Natural killer cell (primary cell): ENCODE measurements at regions of chr1 and their contacts with region 1.

Region 1: GRCh38 chr1:205313563-205314308 is 7.8 kb downstream of the NUAK2 start:
- DNase-seq: peak; percentile 51 to 78
- ATAC-seq: peak; percentile 86 to 91 (median 89)
- H3K4me3 ChIP-seq: peak overlapping the region; percentile 22
- H3K4me3 Mint-ChIP-seq: peak overlapping the region; percentile 86
- H3K27ac ChIP-seq: peak overlapping the region; percentile 88
- H3K27ac Mint-ChIP-seq: peak overlapping the region; percentile 94 to 98
- H3K4me1 ChIP-seq: peaks cover 82% of the 10 kb centered on the region
- H3K4me1 Mint-ChIP-seq: peaks cover 76 to 82% of the 10 kb centered on the region in 2 donors
- H3K27me3 ChIP-seq: no peaks in the 10 kb centered on the region
- H3K27me3 Mint-ChIP-seq: no peaks in the 10 kb centered on the region
- CTCF ChIP-seq: no peak

Region 2: DNA sequence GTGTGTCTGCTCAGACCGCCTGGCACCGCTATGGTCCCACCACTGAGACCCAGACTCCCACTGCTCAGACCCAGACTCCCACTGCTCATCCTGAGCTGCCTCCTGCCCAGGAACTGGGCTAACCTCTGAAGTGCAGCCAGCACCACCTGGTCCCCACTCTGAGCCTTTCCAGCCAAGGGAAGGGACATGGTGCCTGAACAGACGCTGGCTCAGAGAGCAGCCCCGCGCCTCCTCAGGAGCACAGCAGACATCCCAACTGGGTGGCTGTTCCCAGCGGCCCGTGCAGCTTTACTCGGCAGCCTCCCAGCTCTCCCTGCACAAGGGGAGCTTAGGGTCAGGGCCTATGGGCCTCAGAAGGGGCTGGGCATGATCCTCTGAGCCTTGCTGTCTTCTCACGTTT is 298.5 kb before region 1 on chr1:
- intact Hi-C with region 1: no loop called
- DNase-seq: no peak
- ATAC-seq: no peak
- H3K4me3 ChIP-seq: no peak overlapping the region
- H3K4me3 Mint-ChIP-seq: no peak overlapping the region
- H3K27ac ChIP-seq: no peak overlapping the region
- H3K27ac Mint-ChIP-seq: no peak overlapping the region
- H3K4me1 ChIP-seq: no peaks in the 10 kb centered on the region
- H3K4me1 Mint-ChIP-seq: no peaks in the 10 kb centered on the region
- H3K27me3 ChIP-seq: no peaks in the 10 kb centered on the region
- H3K27me3 Mint-ChIP-seq: no peaks in the 10 kb centered on the region
- CTCF ChIP-seq: no peak

Region 3: GRCh38 chr1:205121660-205122488 is 191.9 kb before region 1 on chr1 and contains the start of gene RBBP5:
- intact Hi-C with region 1: loop called (anchors 5 kb)
- DNase-seq: peak; percentile 96 to 98
- ATAC-seq: peak; percentile 93 to 98 (median 93)
- H3K4me3 ChIP-seq: peak within 1 kb of the TSS; percentile 79
- H3K4me3 Mint-ChIP-seq: peak within 1 kb of the TSS; percentile 100
- H3K27ac ChIP-seq: peak within 1 kb of the TSS; percentile 94
- H3K27ac Mint-ChIP-seq: peak within 1 kb of the TSS; percentile 99 to 100
- H3K4me1 ChIP-seq: peaks cover 11% of the 10 kb centered on the region
- H3K4me1 Mint-ChIP-seq: peaks cover 37 to 42% of the 10 kb centered on the region in 2 donors
- H3K27me3 ChIP-seq: no peaks in the 10 kb centered on the region
- H3K27me3 Mint-ChIP-seq: no peaks in the 10 kb centered on the region
- CTCF ChIP-seq: peak; percentile 46
- total RNA-seq, gene RBBP5: 13.9 to 18.2 (median 17.8) TPM